ENCODE measurements at regions of chr13 and their contacts with region 1.

Region 1: DNA sequence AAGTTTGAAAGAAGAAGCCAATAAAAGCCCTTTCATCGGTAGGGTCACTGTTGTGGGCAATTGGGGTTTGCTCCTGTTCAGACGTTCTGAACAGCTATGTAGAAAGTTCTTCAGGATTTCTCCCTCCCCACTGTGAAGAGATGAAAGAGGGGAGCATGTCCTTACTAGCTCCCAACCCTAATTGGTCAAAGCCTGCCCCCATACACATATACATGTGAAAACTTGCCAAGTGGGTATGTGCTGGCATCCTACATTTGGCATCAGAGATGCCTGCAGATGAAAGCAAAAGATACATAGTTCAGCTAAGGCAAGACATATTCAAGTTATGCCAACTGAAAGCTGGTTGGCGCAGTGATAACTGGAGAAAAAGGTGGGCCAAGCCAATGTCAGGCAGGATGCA is 363.1 kb upstream of the DACH1 start:
- DNase-seq: no peak
- H3K4me3 ChIP-seq: no peak overlapping the region
- CTCF ChIP-seq: no peak
- POLR2A ChIP-seq: no peak

Region 2: GRCh38 chr13:70430256-70430655 is 1799.9 kb before region 1 on chr13:
- intact Hi-C with region 1: loop called (anchors 5 kb)
- DNase-seq: no peak
- H3K4me3 ChIP-seq: no peak overlapping the region
- CTCF ChIP-seq: no peak
- POLR2A ChIP-seq: no peak

Region 3: DNA sequence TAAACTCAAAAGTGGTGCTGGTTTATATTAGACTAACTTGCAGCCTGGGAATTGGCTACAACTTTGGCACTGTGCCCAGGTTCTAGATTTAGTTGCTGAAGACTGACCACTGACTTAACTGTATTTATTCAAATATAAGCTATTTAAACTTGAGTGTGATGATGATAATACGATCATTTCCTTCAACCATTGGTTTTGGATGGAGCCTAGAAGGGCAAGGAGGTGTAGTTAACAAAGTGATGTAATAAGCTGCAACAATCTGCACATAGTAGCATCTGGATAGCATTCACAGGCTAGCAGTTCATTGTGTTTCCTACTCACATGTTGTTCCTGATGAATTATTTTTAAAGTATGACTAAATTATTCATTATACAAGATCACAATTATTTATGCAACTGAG is 307.9 kb before region 1 on chr13:
- intact Hi-C with region 1: no loop called
- DNase-seq: no peak
- H3K4me3 ChIP-seq: no peak overlapping the region
- CTCF ChIP-seq: no peak
- POLR2A ChIP-seq: no peak

Region 4: GRCh38 chr13:73321043-73321442 is 1090.9 kb after region 1 on chr13:
- intact Hi-C with region 1: no loop called
- DNase-seq: no peak
- H3K4me3 ChIP-seq: no peak overlapping the region
- CTCF ChIP-seq: no peak
- POLR2A ChIP-seq: no peak

Measured in lower leg skin (tissue), 4 donors.